SK-N-SH (cell line): ENCODE measurements at regions of chr11 and their contacts with region 1.

Region 1: GRCh38 chr11:125592305-125593112 is at the start of gene STT3A:
- DNase-seq: peak; percentile 94
- H3K4me3 ChIP-seq: peak within 1 kb of the TSS; percentile 59 to 98
- H3K27ac ChIP-seq: peak within 1 kb of the TSS; percentile 92 to 98
- H3K4me1 ChIP-seq: peaks cover 2 to 14% of the 10 kb centered on the region in 2 experiments
- H3K27me3 ChIP-seq: no peaks in the 10 kb centered on the region
- CTCF ChIP-seq: no peak
- EP300 ChIP-seq: no peak; a peak in 1 of 4 replicates
- RAD21 ChIP-seq: no peak
- polyA plus RNA-seq, gene STT3A: 101 and 156 TPM in 2 replicates

Region 2: DNA sequence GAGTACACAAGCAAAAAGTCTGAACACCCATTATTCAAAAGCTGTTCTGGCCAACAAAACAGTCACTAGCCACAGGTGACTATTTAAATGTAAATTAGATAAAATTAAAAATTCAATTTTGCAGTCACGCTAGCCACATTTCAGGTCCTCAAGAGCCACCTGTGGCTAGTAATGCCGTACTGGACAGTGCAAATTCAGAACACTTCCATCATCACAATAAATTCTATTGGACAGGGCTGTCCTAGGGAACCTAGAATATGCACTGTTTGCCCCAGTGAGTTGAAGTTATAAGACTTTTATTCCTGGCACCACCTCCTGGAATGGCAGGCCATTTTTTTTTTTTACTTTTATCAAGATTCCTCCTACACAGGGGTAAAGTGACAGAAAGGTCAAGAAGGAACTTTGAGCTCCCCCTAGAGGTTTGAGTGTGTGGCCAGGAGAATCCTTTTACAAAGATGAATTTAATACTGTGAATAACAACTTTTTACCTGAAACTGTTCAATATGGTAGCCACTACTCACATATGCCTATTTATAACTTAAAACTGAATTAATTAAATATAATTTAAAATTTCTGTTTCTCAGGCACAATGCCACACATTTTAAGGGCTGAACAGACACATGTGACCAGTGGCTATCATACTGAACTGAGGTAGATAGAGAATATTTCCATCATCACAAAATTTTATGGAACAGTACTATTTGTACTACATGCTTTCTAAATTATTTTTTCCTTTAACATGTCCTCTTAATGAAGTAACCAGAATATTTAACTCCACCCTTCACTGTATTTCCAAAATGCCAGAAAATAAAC is 798.8 kb before region 1 on chr11:
- CTCF ChIA-PET with region 1: no interaction called
- POLR2A ChIA-PET with region 1: no interaction called
- DNase-seq: peak; percentile 52
- H3K4me3 ChIP-seq: no peak overlapping the region
- H3K27ac ChIP-seq: no peak overlapping the region
- H3K4me1 ChIP-seq: peaks cover 9 to 16% of the 10 kb centered on the region in 2 experiments; a peak in 3 of 4 replicates
- H3K27me3 ChIP-seq: no peaks in the 10 kb centered on the region
- CTCF ChIP-seq: peak; percentile 82
- EP300 ChIP-seq: no peak
- RAD21 ChIP-seq: peak; percentile 67

Region 3: DNA sequence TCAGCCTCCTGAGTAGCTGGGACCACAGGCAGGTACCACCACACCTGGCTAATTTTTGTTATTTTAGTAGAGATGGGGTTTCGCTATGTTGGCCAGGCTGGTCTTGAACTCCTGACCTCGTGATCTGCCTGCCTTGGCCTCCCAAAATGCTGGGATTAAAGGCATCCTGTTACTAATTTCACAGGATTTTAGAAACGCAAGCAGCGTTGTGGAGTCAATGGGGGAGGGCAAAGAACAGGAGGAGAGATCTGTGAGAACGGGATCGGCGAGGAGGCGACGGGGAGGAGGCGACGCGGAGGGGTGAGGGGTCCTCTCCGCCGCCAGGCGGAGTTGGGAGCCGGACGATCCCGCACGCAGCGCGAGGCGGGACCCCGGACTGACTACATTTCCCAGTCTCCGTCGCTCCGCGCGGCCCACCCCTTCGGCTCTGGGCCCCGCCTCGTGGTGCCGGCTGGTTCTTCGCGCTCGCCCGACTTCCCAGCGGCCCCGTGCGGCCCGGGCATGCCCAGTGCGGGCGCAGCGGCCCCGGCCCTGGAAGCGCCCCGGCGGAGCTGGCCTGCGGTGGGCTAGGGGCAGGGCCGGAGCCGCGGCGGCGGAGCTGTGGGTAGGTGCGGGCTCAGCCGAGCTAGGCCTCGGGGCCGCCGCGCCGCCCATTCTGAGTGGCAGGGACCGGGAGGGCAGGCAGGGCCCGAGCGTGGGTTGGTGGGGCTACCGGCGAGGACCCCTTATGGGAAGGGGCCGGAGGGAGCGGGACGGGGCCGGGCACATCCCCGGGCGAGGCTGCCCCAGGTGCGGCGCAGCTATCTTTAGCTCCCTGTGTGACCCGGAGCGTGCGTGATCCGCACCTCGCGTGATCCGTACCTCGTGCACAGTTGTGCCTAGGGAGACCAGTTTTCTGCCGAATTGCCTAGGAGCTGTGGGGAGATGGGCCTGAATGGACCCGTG is 23.3 kb before region 1 on chr11 and contains the start of gene EI24:
- CTCF ChIA-PET with region 1: interaction called, 3 read pairs
- POLR2A ChIA-PET with region 1: interaction called, 10 read pairs
- DNase-seq: peak; percentile 96
- H3K4me3 ChIP-seq: peak within 1 kb of the TSS; percentile 79 to 89
- H3K27ac ChIP-seq: peak within 1 kb of the TSS; percentile 58 to 77
- H3K4me1 ChIP-seq: peaks cover 10 to 11% of the 10 kb centered on the region in 2 experiments; a peak in 3 of 4 replicates
- H3K27me3 ChIP-seq: no peaks in the 10 kb centered on the region
- CTCF ChIP-seq: peak; percentile 65
- EP300 ChIP-seq: no peak
- RAD21 ChIP-seq: peak; percentile 52
- polyA plus RNA-seq, gene EI24: 85.5 and 104 TPM in 2 replicates

Region 4: DNA sequence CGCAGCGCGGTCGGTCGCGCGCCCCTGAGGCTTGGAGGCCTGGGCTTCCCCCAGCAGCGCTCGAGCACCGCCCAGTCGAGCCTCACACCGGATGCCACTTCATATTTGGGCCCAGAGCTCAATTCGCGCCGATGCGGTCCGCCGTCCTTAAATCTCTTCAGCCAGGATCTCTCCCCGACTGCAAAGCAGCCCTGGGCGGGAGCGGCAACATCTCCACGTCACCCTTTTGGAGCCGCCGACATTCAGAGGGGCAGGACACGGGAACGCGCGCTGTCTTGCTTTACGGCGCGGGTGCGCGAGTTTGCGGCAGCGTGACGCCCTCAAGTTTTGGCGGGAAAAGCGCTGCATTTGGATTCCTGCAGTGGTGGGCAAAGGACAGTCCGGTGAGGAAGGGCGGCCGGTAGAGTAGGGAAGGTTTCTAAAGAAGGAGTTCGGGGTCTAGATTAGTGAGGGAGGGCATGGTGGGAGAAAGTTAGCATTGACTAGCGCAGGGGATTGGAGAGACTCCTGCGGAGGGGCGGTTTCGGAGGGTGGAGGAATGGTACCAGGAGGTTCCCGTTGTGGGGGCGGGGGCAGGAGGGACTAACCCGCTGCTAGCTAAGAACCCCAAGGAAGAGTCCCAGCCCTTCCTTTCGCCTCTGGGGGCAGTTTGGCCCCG is 33.2 kb after region 1 on chr11:
- CTCF ChIA-PET with region 1: interaction called, 5 read pairs
- POLR2A ChIA-PET with region 1: interaction called, 13 read pairs
- DNase-seq: peak; percentile 88
- H3K4me3 ChIP-seq: peak overlapping the region; percentile 77 to 79
- H3K27ac ChIP-seq: peak overlapping the region; percentile 92 to 97
- H3K4me1 ChIP-seq: peaks cover 4 to 11% of the 10 kb centered on the region in 2 experiments; a peak in 3 of 4 replicates
- H3K27me3 ChIP-seq: no peaks in the 10 kb centered on the region
- CTCF ChIP-seq: no peak
- EP300 ChIP-seq: no peak
- RAD21 ChIP-seq: no peak